ENCODE measurements at regions of chr11 and their contacts with region 1.

Region 1: DNA sequence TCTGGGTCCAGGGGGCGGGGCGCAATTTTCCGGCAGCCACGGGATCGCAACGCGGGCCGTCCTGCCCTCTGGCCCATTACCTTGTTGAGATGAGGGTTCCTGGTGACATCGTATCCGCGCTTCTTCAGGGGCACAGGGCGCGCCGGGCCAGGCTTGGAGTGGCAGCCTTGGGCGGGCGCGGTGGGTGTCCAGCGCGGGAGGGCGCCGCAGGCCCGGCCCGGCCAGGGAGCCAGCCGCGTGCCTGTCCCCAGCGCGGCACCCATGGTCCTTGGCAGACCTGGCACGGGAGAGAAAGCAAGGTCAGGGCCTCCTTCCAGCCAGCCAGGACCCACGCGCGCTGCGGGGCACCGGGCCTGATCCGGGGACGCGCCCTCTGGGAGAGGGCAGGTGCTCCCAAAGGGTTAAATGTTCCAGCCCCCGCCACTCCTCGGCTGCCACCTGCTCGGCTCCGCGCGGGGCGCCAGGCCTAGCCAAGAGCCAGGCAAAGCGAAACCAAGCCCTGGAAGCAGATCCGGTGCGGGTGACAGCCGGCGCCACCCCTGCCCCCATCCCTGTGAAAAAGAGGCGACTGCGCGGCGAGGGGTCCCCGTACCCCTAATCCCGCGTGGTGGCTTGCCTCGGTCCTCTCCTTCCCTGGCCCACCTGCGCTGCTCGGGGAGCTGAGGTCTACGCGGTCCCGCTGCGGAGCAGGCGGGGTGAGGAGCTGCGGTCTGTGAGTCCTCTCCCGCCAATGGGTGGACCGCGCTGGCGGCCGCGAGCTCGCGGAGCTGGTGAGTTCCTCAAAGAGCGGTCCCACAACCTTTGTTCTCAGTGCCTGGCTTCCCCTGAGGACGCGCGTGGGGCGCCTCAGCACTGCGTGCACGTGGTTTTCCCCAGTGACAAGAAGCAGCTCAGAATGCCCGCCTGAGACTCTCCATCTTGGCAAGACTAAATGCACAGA is at the start of gene ME3:
- DNase-seq: peak; percentile 69
- H3K4me3 Mint-ChIP-seq: peak within 1 kb of the TSS; percentile 71
- H3K27ac Mint-ChIP-seq: peak within 1 kb of the TSS; percentile 56
- H3K4me1 Mint-ChIP-seq: peaks cover 20% of the 10 kb centered on the region
- H3K27me3 Mint-ChIP-seq: peaks cover 12% of the 10 kb centered on the region
- total RNA-seq, gene ME3: 6.0 to 6.7 TPM

Region 2: DNA sequence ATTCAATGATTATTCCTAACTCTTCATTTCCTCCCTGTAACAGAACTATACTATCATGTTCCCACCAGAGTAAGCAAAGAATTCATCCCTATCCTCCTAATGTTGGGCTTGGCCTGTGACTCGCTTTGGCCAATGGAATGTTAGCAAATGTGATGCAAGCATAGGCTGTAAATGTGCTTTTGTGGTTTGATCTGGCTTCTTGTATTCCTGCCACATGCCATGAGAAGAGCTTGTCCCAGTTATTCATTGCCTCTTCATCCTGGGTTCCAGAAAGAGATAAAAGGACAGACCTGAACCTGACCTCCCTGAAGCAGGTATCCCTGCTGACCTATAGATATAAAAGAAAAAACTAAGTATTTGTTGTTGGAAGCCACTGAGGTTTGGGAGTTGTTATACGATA is 912.0 kb before region 1 on chr11:
- CTCF ChIA-PET with region 1: no interaction called
- intact Hi-C with region 1: loop called (anchors 10 kb)
- DNase-seq: no peak
- H3K4me3 Mint-ChIP-seq: no peak overlapping the region
- H3K27ac Mint-ChIP-seq: no peak overlapping the region
- H3K4me1 Mint-ChIP-seq: peaks cover 65% of the 10 kb centered on the region
- H3K27me3 Mint-ChIP-seq: no peaks in the 10 kb centered on the region

Region 3: GRCh38 chr11:86637988-86638387 is 34.0 kb before region 1 on chr11:
- CTCF ChIA-PET with region 1: interaction called, 3 read pairs
- intact Hi-C with region 1: loop called (anchors 2 kb)
- DNase-seq: peak; percentile 18
- H3K4me3 Mint-ChIP-seq: no peak overlapping the region
- H3K27ac Mint-ChIP-seq: no peak overlapping the region
- H3K4me1 Mint-ChIP-seq: peaks cover 33% of the 10 kb centered on the region
- H3K27me3 Mint-ChIP-seq: no peaks in the 10 kb centered on the region

Region 4: DNA sequence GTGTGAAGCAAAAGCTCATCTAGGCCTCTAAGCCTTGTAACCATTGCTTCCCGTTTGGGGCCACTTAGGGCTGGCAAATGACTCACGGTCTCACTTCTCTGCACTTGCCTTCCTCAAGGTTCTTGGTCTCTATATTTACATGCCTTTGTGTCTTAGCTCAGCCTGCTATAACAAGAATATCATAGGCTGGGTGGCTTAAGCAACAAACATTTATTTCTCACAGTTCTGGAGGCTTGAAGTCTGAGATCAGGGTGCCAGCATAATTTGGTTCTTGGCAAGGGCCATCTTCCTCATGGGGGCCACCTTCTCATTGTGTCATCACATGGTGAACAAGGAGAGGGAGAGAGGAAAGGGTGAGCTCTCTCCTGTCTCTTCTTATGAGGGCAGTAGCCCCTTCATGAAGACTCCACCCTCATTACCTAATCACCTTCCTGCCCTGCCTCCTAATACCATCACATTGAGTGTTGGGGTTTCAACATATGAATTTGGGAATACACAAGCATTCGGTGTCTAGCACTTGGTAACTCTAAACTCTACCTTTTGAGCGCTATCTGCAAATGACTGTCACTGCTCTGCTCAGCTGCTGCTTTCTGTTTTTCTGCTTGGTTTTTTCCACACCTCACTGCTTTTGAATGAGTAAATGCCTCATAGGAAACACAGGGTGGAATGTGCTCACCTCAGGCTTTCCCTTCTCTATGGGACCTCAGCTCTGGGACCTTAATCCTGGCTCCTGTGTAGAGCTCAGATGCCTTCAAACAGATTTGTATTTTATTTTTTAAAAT is 16.6 kb after region 1 on chr11:
- CTCF ChIA-PET with region 1: no interaction called
- intact Hi-C with region 1: loop called (anchors 1 kb)
- DNase-seq: peak; percentile 70
- H3K4me3 Mint-ChIP-seq: no peak overlapping the region
- H3K27ac Mint-ChIP-seq: peak overlapping the region; percentile 90
- H3K4me1 Mint-ChIP-seq: peaks cover 27% of the 10 kb centered on the region
- H3K27me3 Mint-ChIP-seq: peaks cover 2% of the 10 kb centered on the region

Region 5: GRCh38 chr11:86740709-86741483 is 68.9 kb after region 1 on chr11:
- CTCF ChIA-PET with region 1: no interaction called
- intact Hi-C with region 1: loop called (anchors 1 kb)
- DNase-seq: peak; percentile 26
- H3K4me3 Mint-ChIP-seq: no peak overlapping the region
- H3K27ac Mint-ChIP-seq: no peak overlapping the region
- H3K4me1 Mint-ChIP-seq: peaks cover 11% of the 10 kb centered on the region
- H3K27me3 Mint-ChIP-seq: peaks cover 10% of the 10 kb centered on the region

Region 6: DNA sequence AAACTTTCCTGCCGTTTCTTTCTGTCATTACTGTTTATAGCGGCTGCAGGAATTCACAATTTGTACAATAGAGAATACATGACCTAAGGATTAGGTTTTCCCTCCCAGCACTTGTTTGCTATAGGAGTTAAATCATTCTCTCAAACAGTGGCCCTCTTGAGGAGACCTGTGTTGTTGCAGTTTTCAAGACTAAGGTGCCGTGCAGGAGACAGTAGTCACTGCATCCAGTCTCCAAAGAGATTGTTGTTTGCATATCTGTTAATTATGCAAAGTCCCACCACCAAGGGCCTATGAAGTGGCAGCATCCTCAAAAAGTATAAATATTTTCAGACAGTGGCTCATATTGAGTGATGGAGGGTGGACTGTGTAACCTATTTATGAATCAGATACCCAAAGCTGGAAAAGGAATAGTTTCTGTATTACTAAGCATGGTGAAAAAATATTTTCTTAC is 130.7 kb after region 1 on chr11:
- CTCF ChIA-PET with region 1: interaction called, 3 read pairs
- intact Hi-C with region 1: loop called (anchors 2 kb)
- DNase-seq: peak; percentile 38
- H3K4me3 Mint-ChIP-seq: no peak overlapping the region
- H3K27ac Mint-ChIP-seq: no peak overlapping the region
- H3K4me1 Mint-ChIP-seq: peaks cover 53% of the 10 kb centered on the region
- H3K27me3 Mint-ChIP-seq: peaks cover 46% of the 10 kb centered on the region

Region 7: DNA sequence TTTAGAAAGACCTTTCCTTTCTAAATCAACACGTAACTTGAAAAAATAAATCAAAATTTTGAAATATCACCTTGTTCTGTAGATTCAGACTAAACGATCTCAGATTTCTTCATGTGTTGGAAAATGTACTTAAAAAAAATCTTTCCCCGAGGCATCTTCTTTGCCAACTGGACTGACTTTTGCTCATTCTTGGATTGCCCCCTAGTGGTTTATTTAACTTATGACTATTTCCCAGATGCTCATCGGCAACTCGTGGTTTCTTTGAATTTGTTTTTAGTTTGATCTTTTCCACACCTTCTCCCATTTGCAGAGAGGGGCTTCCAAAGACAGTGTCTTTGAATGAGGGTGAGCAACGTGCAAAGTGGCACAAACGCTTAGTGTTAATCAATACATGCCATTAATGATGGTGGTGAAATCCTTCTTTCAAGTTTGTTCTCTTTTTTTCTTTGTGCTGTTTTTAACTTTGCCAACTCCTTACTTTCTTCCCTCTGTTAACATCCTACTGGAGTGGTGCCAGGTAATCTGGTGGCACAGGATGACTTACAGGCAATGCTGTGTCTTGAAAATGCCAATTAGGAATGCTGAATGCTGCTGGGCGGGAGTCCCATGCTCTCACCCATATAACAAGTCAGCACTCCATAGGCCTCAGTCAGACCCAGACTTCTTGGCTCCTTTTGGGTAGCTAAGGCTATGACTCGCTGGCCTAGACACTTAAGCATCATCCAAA is 146.7 kb after region 1 on chr11:
- CTCF ChIA-PET with region 1: no interaction called
- intact Hi-C with region 1: loop called (anchors 1 kb)
- DNase-seq: no peak
- H3K4me3 Mint-ChIP-seq: no peak overlapping the region
- H3K27ac Mint-ChIP-seq: no peak overlapping the region
- H3K4me1 Mint-ChIP-seq: peaks cover 4% of the 10 kb centered on the region
- H3K27me3 Mint-ChIP-seq: peaks cover 21% of the 10 kb centered on the region

Region 8: DNA sequence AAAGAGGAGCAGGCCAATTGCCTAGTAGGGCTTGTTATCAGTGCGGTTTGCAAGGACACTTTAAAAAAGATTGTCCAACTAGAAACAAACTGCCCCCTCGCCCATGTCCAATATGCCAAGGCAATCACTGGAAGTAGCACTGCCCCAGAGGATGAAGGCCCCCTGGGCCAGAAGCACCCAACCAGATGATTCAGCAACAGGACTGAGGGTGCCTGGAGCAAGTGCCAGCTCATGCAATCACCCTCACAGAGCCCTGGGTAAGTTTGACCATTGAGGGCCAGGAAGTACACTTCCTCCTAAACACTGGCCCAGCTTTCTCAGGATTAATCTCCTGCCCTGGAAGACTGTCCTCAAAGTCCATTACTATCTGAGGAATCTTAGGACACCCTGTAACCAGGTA is 176.9 kb after region 1 on chr11:
- CTCF ChIA-PET with region 1: no interaction called
- intact Hi-C with region 1: no loop called
- DNase-seq: no peak
- H3K4me3 Mint-ChIP-seq: no peak overlapping the region
- H3K27ac Mint-ChIP-seq: no peak overlapping the region
- H3K4me1 Mint-ChIP-seq: no peaks in the 10 kb centered on the region
- H3K27me3 Mint-ChIP-seq: peaks cover 1% of the 10 kb centered on the region